Heart right ventricle (tissue), 16 donors: ENCODE measurements at regions of chr16 and their contacts with region 1.

Region 1: DNA sequence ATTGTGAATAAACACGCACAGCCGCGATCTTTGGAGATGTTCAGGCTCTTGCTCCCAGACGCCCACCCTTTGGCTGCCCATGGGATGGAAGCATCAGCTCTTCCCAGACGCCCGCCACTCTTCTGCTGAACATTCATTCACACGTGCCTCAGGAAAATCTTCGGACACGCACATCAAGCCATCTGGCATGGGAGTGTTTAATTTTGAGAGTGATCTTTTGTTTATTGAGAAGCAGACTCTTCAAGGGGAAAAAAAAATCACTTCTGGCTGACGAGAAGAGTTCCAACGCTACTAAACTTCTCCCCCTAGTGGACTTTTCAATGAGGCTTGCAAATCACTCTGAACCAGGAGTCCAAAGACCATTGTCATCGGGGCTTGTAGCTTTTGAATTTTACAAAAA is 62.0 kb upstream of the NUDT7 start:
- DNase-seq: no peak
- ATAC-seq: peak in 1 of 8 donors; percentile 47
- H3K4me3 ChIP-seq: no peak overlapping the region
- H3K27ac ChIP-seq: no peak overlapping the region
- H3K4me1 ChIP-seq: peaks cover 0 to 2% (median 0%) of the 10 kb centered on the region in 9 donors
- H3K27me3 ChIP-seq: peaks cover 0 to 29% (median 8%) of the 10 kb centered on the region in 7 donors
- CTCF ChIP-seq: peak in 7 of 9 donors; percentile 50 to 70 (median 56)

Region 2: DNA sequence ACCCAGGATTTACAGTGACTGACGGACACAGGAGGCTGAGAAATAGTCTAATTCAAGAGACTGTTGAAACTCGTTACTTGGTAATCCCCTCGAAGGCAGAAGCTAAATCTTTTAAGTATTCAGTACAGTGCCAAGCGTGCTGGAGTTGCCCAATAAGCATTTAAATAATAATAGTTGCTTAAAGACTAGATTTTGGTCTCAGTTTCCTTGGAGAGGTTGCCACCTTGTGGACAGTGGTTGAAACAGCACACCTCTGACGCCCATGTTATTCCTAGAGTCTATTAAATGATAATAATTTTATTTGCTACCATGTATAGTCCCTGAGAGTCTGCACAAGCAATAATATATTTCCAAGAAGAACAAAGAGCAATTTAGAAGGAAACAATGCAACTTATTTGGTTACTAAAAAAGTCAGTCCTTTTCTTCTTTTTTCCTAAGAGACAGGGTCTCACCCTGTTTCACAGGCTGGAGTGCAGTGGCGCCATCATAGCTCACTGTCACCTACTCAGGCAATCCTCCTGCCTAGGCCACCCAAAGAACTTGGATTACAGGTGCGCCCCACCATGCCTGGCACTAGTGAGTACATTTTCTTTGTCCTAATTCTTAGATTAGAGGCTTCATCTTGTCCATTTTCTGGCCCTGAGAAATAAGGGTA is 76.0 kb before region 1 on chr16:
- intact Hi-C with region 1: loop called in 1 of 10 experiments (anchors 5 kb)
- DNase-seq: peak in 1 of 2 donors; percentile 35
- ATAC-seq: peak in 6 of 8 donors; percentile 45 to 71 (median 52)
- H3K4me3 ChIP-seq: no peak overlapping the region
- H3K27ac ChIP-seq: peak overlapping the region in 2 of 10 donors; percentile 4 to 6
- H3K4me1 ChIP-seq: peaks cover 0 to 30% (median 3%) of the 10 kb centered on the region in 9 donors
- H3K27me3 ChIP-seq: peaks cover 0 to 33% (median 6%) of the 10 kb centered on the region in 7 donors
- CTCF ChIP-seq: peak; percentile 80 to 92 (median 89)

Region 3: DNA sequence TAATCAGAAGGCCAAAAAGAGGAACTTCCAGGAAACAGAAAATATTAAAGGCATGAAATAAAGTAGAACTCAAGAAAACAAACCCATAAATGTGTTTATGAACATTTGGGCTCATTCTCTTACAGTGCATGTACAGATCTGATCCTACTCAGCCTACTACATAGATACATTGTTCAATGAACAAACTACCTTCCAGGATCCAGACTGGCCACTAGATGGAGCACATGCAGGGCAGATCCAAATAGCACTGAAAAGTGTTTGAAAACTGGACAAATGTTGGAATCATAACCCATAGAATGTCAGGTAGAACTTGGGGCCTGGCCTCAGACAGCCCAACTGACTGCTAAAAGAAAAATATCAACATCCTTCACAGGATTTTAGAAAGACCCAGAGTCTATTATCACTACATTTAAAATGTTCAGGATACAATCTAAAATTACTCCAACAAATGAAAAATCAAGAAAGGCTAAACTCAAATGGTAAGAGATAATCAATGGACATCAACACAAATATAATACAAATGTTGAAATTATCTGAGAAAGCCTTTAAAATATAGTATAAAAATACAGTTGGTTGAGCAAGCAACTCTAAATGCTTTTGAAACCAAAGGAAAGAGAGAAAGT is 60.4 kb before region 1 on chr16:
- intact Hi-C with region 1: loop called in 4 of 10 experiments (anchors 5 kb)
- DNase-seq: peak in 1 of 2 donors; percentile 19
- ATAC-seq: no peak
- H3K4me3 ChIP-seq: no peak overlapping the region
- H3K27ac ChIP-seq: no peak overlapping the region
- H3K4me1 ChIP-seq: peaks cover 0 to 15% (median 0%) of the 10 kb centered on the region in 9 donors
- H3K27me3 ChIP-seq: no peaks in the 10 kb centered on the region
- CTCF ChIP-seq: peak; percentile 27 to 78 (median 67)